Adrenal gland (tissue), 19 donors: ENCODE measurements at regions of chr5 and their contacts with region 1.

Region 1: GRCh38 chr5:140690941-140691924 is at the starts of genes HARS1 and HARS2:
- DNase-seq: peak; percentile 86 to 96 (median 93)
- H3K4me3 ChIP-seq: peak within 1 kb of the TSS; percentile 25 to 95 (median 82)
- H3K27ac ChIP-seq: peak within 1 kb of the TSS; percentile 71 to 90 (median 80)
- H3K4me1 ChIP-seq: peaks cover 22 to 33% of the 10 kb centered on the region in 2 donors
- H3K27me3 ChIP-seq: no peaks in the 10 kb centered on the region
- CTCF ChIP-seq: peak in 2 of 6 experiments; percentile 13 to 20
- POLR2A ChIP-seq: peak in 1 of 2 donors; percentile 62
- total RNA-seq, gene HARS1: 36.4 to 80.6 (median 55.7) TPM
- total RNA-seq, gene HARS2: 21.3 to 51.2 (median 32.9) TPM

Region 2: DNA sequence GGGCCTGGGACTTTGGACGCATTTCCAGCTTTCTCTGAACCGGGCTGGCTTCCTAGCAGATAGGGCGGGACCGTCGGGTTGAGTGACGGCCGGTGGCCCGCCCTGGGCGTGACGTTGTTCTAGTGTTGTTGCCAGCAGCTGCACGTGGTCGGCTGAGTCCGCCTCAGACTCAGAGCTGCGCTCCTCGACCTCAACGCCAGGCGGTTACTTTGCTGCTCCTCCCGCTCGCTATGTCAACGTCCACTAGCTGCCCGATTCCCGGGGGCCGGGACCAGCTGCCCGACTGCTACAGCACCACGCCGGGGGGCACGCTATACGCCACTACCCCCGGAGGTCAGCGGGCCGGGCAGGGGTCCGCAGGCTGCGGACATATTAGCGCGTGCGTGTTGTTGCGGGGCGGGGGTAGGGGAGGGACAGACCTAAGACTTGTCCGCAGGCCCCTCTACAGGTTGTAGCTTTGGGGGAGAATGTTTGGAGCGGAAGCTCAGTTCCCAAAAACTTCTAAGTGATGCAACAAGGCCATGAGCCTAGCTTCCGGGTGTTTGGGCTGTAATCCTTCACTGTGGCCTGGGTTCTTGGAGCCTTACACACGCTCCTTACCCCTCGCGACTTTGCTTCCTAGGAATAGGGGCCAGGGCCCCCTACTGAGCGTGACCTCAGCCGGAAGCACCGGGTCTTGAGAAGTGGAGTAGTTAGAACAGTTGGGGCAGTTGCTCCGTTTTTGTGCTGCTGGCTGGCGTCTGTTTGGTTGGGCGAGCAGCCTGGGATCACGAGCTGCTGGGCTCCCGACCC is 143.5 kb before region 1 on chr5 and contains the start of gene EIF4EBP3:
- intact Hi-C with region 1: loop called in 1 of 2 experiments (anchors 10 kb)
- DNase-seq: peak; percentile 97 to 99 (median 99)
- H3K4me3 ChIP-seq: peak within 1 kb of the TSS in 3 of 4 donors; percentile 33 to 53 (median 41)
- H3K27ac ChIP-seq: peak within 1 kb of the TSS; percentile 85 to 99 (median 99)
- H3K4me1 ChIP-seq: peaks cover 31 to 41% of the 10 kb centered on the region in 2 donors
- H3K27me3 ChIP-seq: no peaks in the 10 kb centered on the region
- CTCF ChIP-seq: peak; percentile 33 to 93 (median 88)
- POLR2A ChIP-seq: peak; percentile 74 to 96
- total RNA-seq, gene EIF4EBP3: 5.9 to 80.5 (median 40.0) TPM

Region 3: DNA sequence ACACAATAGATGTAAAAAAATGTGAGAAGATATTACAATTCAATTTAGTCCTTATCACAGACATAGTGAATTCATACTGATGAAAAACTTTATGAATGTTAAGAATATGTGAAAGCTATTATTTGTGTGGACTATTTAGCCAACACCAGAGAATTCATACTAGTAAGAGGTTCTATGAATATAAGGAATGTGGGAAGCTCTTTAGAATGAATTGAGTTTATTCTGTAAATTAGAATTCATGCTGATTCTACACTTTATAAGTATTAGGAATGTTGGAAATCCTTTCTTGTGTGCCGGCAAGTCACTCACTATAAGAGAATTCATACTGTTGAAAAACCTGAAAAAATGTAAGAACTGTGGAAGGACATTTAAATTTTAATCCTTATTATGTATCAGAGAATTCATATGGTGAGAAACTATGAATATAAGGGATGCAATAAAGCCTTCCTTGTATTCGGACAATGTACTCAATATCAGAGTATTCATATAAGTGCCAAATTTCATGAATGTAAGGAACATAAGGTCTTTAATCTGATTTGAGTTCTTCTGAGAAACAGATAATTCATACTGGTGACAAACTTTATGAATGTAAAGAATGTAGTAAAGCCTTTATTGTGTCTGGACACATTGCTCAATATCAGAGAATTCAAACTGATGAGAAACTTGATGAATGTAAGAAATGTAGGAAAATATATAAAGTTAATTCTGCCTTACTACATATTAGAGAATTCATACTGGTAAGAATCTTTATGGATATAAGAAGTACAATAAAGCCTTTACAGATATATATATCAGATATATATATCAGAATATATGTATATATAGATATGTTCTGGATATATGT is 73.2 kb after region 1 on chr5:
- intact Hi-C with region 1: no loop called
- DNase-seq: no peak
- H3K4me3 ChIP-seq: no peak overlapping the region
- H3K27ac ChIP-seq: no peak overlapping the region
- H3K4me1 ChIP-seq: no peaks in the 10 kb centered on the region
- H3K27me3 ChIP-seq: no peaks in the 10 kb centered on the region
- CTCF ChIP-seq: no peak
- POLR2A ChIP-seq: no peak

Region 4: DNA sequence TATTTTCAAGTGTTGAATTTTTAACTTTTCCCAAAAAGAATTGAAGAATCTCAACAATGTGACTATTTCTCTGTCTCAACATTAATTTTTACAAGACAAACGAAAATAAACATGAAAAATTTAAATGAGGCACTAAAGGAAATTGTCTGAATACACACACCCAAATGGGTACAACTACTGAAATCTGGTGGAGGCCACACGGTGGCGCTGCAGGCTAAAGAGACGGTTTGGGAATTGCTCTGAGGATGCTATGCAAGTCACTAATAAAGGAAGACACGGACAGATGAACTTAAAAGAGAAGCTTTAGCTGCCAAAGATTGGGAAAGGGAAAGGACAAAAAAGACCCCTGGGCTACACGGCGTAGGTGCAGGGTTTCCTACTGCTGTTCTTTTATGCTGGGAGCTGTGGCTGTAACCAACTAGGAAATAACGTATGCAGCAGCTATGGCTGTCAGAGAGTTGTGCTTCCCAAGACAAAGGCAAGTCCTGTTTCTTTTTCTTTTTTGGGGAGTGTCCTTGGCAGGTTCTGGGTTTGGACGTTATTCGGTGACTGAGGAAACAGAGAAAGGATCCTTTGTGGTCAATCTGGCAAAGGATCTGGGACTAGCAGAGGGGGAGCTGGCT is 501.0 kb after region 1 on chr5 and contains the start of gene PCDHB10:
- intact Hi-C with region 1: no loop called
- DNase-seq: peak in 1 of 7 donors; percentile 4
- H3K4me3 ChIP-seq: no peak within 1 kb of the TSS
- H3K27ac ChIP-seq: no peak within 1 kb of the TSS
- H3K4me1 ChIP-seq: no peaks in the 10 kb centered on the region
- H3K27me3 ChIP-seq: no peaks in the 10 kb centered on the region
- CTCF ChIP-seq: peak in 5 of 6 experiments; percentile 8 to 29 (median 13)
- POLR2A ChIP-seq: no peak
- total RNA-seq, gene PCDHB10: 0.18 to 2.3 (median 0.61) TPM